GM13976 (cell line): ENCODE measurements at regions of chr5 and their contacts with region 1.

Region 1: GRCh38 chr5:113513384-113514288 is at the start of gene YTHDC2:
- DNase-seq: peak; percentile 86
- CTCF ChIP-seq: peak; percentile 5

Region 2: GRCh38 chr5:112976432-112977309 is 537.0 kb before region 1 on chr5 and contains the start of gene DCP2:
- in situ Hi-C with region 1: loop called (anchors 25 kb)
- DNase-seq: peak; percentile 96
- CTCF ChIP-seq: no peak

Region 3: DNA sequence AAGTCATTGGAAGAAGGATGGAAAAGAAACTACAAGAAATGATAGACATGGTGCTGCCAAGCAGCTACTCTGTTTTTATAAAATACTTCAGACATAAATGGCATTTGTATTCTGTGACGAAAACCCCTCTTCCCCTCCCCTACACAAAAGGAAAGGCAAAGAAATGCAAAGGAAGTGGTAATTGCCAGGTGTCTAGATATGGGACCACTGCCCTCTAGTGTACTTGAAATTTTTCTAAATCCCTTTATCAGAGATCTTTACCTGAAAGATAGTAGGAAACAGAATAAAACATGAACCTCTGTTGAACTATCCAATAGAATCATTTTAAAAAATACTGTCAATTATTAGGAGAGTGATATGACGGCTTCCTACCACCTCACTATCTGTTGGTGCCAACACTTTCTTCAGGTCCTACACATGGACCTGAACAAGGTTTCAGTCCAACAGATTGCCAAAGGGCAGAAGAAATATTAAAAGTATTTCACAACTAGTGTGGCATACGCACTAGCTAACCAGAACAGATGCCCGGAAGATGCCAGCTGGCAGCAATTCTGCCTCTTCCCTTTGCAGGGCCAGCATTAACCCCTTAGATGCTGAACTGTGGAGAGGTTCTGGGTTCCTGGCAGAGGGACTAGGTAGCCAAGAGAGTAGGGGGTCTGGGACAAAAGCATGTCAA is 183.0 kb before region 1 on chr5:
- in situ Hi-C with region 1: loop called (anchors 25 kb)
- DNase-seq: peak; percentile 37
- CTCF ChIP-seq: no peak

Region 4: DNA sequence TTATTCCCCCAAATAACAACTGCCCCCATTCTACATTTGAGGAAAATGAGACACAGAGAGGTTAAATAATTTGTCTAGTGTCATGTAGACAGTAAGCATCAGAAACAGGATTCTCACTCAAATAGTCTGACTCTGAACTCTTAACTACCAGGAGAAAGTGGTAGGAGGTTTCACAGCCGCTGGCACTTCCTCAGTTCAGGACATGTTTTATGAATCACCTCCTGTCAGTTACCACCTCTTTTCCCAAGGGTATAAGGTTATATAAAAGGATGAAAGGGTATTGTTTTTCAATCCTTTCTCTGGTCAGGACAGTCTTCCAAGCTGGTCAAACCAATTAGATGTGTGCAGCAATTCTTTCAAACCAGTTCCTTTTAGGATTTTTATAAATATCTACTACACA is 130.9 kb before region 1 on chr5:
- in situ Hi-C with region 1: loop called (anchors 10 kb)
- DNase-seq: no peak
- CTCF ChIP-seq: no peak

Region 5: DNA sequence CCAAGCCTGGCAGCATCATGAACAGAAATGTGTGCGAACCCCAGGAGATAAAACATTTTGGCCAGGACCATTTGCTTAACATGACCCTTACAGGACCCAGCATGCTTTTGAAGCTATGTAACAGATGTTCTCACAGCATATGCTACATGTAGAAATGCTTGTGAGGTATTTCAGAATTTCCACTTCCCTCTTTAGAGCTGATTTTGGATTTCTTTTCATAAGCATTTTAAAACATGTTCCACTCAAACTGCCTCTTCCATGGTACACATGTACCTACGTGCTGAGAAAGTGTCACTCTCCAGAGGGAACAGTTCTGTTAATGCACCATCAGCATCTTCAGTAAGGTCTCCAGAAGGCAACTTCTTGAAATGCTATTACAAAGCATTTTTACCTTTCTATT is 63.2 kb before region 1 on chr5:
- in situ Hi-C with region 1: no loop called
- DNase-seq: no peak
- CTCF ChIP-seq: no peak

Region 6: DNA sequence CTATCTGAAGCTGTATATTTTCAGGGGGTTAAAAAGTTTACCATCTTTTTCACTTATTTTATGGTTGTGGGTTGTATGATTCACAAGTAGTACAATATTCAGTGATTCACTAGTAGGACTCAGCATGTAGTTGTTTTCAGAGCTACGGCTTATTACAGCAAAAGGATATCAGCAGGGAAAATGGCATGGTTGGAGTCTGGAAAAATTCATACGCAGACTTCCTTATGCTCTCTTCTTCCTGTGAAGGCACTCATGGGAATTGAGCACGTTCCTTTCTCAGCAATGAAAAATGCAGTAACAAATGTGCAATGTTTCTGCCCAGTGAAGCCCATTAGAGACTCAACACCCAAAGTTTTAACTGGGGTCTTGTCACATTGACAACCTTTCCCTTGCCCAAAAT is 1098.8 kb after region 1 on chr5:
- in situ Hi-C with region 1: no loop called
- DNase-seq: no peak
- CTCF ChIP-seq: no peak